Endothelial cell of umbilical vein (primary cell): ENCODE measurements at regions of chr6 and their contacts with region 1.

Region 1: GRCh38 chr6:31087494-31088089 is 24.8 kb downstream of the C6orf15 start:
- DNase-seq: peak; percentile 93
- H3K4me3 ChIP-seq: peak overlapping the region in 1 of 3 experiments; percentile 42
- H3K27ac ChIP-seq: peak overlapping the region; percentile 84
- H3K4me1 ChIP-seq: peaks cover 12% of the 10 kb centered on the region
- H3K27me3 ChIP-seq: no peaks in the 10 kb centered on the region
- CTCF ChIP-seq: peak; percentile 72 to 74
- POLR2A ChIP-seq: no peak

Region 2: GRCh38 chr6:30541515-30542403 is 545.8 kb before region 1 on chr6:
- CTCF ChIA-PET with region 1: interaction called, 10 read pairs
- POLR2A ChIA-PET with region 1: no interaction called
- dilution Hi-C with region 1: no loop called
- intact Hi-C with region 1: loop called (anchors 5 kb)
- DNase-seq: peak; percentile 91
- H3K4me3 ChIP-seq: peak overlapping the region; percentile 18 to 47 (median 21)
- H3K27ac ChIP-seq: peak overlapping the region; percentile 81
- H3K4me1 ChIP-seq: peaks cover 29% of the 10 kb centered on the region
- H3K27me3 ChIP-seq: no peaks in the 10 kb centered on the region
- CTCF ChIP-seq: peak; percentile 96 to 99
- POLR2A ChIP-seq: peak; percentile 55

Region 3: GRCh38 chr6:30742316-30743098 is 345.1 kb before region 1 on chr6 and contains the start of gene FLOT1:
- CTCF ChIA-PET with region 1: interaction called, 7 read pairs
- POLR2A ChIA-PET with region 1: no interaction called
- dilution Hi-C with region 1: no loop called
- intact Hi-C with region 1: loop called (anchors 5 kb)
- DNase-seq: peak; percentile 94
- H3K4me3 ChIP-seq: peak within 1 kb of the TSS; percentile 37 to 83 (median 80)
- H3K27ac ChIP-seq: peak within 1 kb of the TSS; percentile 89
- H3K4me1 ChIP-seq: peaks cover 47% of the 10 kb centered on the region
- H3K27me3 ChIP-seq: no peaks in the 10 kb centered on the region
- CTCF ChIP-seq: no peak
- POLR2A ChIP-seq: peak; percentile 83
- total RNA-seq, gene FLOT1: 141 and 145 TPM in 2 replicates

Region 4: GRCh38 chr6:30877419-30878371 is 209.9 kb before region 1 on chr6:
- CTCF ChIA-PET with region 1: interaction called, 36 read pairs
- POLR2A ChIA-PET with region 1: no interaction called
- dilution Hi-C with region 1: no loop called
- intact Hi-C with region 1: loop called (anchors 1 kb)
- DNase-seq: peak; percentile 92
- H3K4me3 ChIP-seq: peak overlapping the region in 2 of 3 experiments; percentile 9 to 31
- H3K27ac ChIP-seq: peak overlapping the region; percentile 81
- H3K4me1 ChIP-seq: peaks cover 23% of the 10 kb centered on the region
- H3K27me3 ChIP-seq: peaks cover 0 to 2% of the 10 kb centered on the region in 2 experiments
- CTCF ChIP-seq: peak; percentile 83 to 90
- POLR2A ChIP-seq: peak; percentile 49

Region 5: DNA sequence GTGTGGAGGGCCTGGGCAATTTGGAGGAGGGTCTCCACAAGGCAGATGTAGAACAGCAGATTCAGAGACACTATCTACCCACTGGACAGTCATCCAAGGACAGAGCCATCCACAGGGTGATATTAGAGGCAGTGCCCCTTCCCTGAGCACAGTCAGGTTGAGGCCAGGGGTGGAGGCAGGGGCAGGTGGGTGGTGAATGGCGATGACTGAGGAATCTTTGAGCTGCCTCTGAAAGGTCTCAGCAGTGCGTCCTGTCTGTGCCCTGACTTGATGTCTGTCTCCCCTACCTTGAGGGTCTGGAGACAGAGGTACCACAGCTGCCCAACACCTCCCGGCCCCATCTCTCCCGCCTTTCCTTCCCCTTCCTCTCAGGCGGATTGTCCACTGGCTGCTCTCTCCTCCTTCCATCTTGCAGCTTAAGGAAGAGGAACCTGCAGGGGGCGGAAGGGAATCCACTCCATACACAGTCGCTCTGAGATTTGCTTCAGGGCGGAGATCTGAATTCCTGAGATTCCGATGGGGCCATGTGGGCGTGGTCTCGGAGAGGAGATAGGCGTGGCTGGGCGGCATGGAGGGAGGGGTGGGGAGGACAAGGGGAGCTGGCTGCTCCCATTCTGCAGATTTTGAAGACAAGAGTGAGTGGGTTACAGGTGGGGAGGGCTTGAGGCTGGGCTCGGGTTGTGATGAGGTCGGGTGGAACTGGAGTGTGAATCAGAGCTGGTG is 145.1 kb before region 1 on chr6:
- CTCF ChIA-PET with region 1: interaction called, 20 read pairs
- POLR2A ChIA-PET with region 1: no interaction called
- dilution Hi-C with region 1: no loop called
- intact Hi-C with region 1: loop called (anchors 1 kb)
- DNase-seq: peak; percentile 56
- H3K4me3 ChIP-seq: no peak overlapping the region
- H3K27ac ChIP-seq: no peak overlapping the region
- H3K4me1 ChIP-seq: no peaks in the 10 kb centered on the region
- H3K27me3 ChIP-seq: peaks cover 6 to 16% of the 10 kb centered on the region in 2 experiments
- CTCF ChIP-seq: peak; percentile 55
- POLR2A ChIP-seq: no peak

Region 6: DNA sequence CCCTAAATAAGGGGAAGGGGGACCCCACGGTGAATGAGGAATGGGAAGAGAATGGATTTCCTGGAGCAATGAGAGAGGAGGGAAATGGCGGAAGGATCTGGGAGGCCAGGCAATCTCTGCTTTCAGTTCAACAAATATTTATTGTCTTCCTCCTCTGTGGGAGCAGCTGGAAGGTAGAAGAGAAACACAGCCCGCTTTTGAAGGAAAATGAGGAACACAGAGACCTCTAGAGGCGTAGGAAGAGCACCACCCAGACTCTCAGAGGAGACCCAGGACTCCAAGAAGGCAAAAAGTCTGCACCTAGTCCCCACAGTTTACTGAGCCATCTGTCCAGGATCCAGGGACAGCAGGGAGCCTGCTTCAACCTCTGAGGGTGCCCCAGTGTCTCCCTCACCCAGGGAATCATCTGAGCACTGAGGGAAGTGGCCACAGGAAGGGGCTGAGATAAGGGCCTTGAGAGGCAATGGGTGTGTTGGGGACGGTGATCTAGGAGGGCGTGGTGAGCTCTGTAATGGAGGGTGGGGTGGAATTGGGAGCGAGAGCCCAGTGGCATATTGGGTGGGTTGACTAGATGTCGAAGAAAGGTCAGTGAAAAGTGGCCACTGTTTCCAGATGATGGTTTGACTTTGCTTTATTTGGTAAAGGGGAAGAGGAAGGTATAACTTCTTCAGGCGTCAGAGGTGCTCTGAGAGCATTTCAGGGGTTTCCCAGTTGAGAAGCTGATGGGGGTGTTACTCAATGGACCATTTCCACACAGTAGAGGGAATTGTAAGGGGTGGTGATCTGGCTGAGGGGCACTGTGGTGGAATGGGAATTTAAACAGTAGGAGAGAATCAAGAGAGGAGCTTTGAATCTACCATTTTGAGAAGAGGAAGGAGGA is 27.6 kb after region 1 on chr6:
- CTCF ChIA-PET with region 1: interaction called, 102 read pairs
- POLR2A ChIA-PET with region 1: interaction called, 4 read pairs
- dilution Hi-C with region 1: no loop called
- intact Hi-C with region 1: loop called (anchors 1 kb)
- DNase-seq: peak; percentile 51
- H3K4me3 ChIP-seq: peak overlapping the region in 1 of 3 experiments; percentile 3
- H3K27ac ChIP-seq: peak overlapping the region; percentile 51
- H3K4me1 ChIP-seq: peaks cover 21% of the 10 kb centered on the region
- H3K27me3 ChIP-seq: peaks cover 4 to 6% of the 10 kb centered on the region in 2 experiments
- CTCF ChIP-seq: peak; percentile 13 to 20
- POLR2A ChIP-seq: no peak